ENCODE measurements at regions of chr16 and their contacts with region 1.

Region 1: DNA sequence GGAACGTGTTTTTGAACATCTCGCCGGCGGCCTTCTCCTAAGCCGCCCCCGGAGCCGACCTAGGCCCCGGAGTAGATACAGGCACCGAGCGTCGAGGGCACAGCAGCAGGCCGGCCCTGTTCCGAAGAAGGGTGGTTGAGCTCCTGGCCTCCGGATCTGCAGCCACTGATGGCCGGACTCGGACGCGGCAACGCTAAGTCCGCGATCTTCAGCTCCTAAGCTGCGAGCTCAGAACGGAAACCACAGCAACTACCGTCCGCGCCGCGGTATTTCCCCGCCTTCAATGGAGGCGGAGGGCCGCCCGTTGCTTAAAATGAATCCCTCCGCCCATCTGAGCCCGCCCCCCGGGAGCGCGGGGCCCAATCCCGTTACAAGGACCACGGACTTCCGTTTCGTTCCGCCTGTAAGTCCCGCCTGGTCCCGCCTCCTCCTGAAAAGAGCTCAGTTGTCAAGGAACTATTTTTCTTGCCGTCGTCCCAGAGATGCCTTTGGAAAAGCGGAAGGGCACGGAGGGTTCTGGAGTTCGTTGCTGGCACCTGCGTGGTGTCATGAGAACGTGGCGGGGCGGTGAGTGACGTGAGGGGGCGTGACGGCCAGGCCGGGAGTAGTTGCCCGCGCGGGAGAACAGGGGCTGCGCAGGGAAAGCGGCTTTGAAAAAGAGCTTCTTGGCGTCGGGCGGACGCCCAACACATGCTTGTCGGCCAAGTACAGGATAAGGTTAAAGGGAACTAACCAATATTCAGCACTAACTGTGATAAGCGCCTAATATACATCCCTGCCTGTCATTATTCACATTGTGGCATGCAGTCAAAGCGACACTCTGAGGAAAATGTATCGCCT is at the start of gene CFAP20:
- DNase-seq: peak; percentile 87 to 99 (median 97)
- ATAC-seq: peak; percentile 94
- H3K4me3 ChIP-seq: peak within 1 kb of the TSS; percentile 99
- H3K4me3 Mint-ChIP-seq: peak within 1 kb of the TSS; percentile 89 to 96 (median 92)
- H3K27ac ChIP-seq: peak within 1 kb of the TSS; percentile 90
- H3K27ac Mint-ChIP-seq: peak within 1 kb of the TSS; percentile 80 to 98 (median 94)
- H3K4me1 ChIP-seq: peaks cover 17 to 29% of the 10 kb centered on the region in 2 donors
- H3K4me1 Mint-ChIP-seq: peaks cover 30 to 47% (median 45%) of the 10 kb centered on the region in 7 donors
- H3K27me3 ChIP-seq: no peaks in the 10 kb centered on the region
- H3K27me3 Mint-ChIP-seq: no peaks in the 10 kb centered on the region
- total RNA-seq, gene CFAP20: 28.2 to 165 (median 40.7) TPM

Region 2: DNA sequence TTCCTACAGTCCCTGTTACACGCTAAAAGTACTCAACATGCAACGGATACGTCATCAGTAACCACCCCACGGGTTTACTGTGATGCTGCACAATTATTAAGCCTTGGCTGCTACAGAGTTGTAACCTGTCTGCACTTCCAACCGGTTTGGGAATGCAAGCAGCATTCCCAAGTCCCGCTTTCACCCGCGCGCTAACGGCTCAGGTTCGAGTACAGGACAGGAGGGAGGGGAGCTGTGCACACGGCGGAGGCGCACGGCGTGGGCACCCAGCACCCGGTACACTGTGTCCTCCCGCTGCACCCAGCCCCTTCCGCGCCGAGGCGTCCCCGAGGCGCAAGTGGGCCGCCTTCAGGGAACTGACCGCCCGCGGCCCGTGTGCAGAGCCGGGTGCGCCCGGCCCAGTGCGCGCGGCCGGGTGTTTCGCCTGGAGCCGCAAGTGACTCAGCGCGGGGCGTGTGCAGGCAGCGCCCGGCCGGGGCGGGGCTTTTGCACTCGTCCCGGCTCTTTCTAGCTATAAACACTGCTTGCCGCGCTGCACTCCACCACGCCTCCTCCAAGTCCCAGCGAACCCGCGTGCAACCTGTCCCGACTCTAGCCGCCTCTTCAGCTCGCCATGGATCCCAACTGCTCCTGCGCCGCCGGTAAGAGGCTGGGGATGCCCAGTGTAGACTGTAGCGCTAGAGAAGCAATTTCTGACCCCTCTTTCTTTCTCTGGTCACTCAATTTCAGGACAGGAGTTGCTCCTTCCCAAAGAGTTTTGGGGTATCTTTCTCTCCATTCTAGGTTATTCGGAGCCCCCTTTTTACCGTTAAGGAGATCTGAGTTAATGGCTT is 1521.1 kb before region 1 on chr16 and contains the start of gene MT2A:
- CTCF ChIA-PET with region 1: no interaction called
- POLR2A ChIA-PET with region 1: no interaction called
- intact Hi-C with region 1: loop called in 1 of 2 experiments (anchors 2 kb)
- DNase-seq: peak; percentile 70 to 89 (median 84)
- ATAC-seq: peak; percentile 88
- H3K4me3 ChIP-seq: peak within 1 kb of the TSS; percentile 97
- H3K4me3 Mint-ChIP-seq: peak within 1 kb of the TSS; percentile 85 to 100 (median 96)
- H3K27ac ChIP-seq: peak within 1 kb of the TSS; percentile 94
- H3K27ac Mint-ChIP-seq: peak within 1 kb of the TSS; percentile 85 to 99 (median 93)
- H3K4me1 ChIP-seq: peaks cover 29 to 34% of the 10 kb centered on the region in 2 donors
- H3K4me1 Mint-ChIP-seq: peaks cover 35 to 52% (median 47%) of the 10 kb centered on the region in 7 donors
- H3K27me3 ChIP-seq: no peaks in the 10 kb centered on the region
- H3K27me3 Mint-ChIP-seq: no peaks in the 10 kb centered on the region
- total RNA-seq, gene MT2A: 15.0 to 435 (median 32.8) TPM

Region 3: DNA sequence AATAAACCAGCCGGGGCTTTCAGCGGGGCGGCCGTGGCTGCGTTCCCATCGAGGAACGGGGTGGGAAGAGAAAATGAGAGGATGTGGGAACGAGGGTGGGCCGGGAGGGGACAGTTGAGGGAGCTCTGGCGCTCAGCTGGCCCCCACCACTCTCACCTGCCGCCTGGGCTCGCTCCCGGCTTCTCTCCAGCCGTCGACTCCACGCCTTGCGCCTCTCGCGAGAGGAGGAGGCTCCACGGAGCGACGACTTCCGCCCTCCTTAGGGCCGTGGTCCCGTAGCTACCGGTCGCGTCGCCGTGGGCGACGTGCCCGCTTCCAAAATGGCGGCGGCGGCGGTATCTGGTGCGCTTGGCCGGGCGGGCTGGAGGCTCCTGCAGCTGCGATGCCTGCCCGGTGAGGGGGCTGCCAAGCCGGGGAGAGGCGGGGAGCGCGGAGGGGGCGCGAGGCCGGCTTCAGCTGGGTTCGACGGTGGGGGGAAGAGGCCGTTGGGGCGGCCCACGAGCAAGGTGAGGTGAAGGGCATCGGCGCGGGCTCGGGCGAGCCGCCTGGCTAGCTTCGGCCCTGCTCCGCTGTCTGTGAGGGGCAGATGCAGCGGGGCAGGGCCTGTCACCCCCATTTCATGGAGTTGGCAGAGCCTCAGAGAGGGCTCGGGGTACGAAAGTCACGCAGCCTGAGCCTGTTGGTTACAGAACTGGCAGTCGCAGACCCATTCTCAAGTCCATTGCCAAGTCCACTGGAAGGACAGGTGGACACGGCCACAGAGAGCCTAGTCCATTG is 681.9 kb before region 1 on chr16 and contains the starts of genes CIAPIN1 and COQ9:
- CTCF ChIA-PET with region 1: no interaction called
- POLR2A ChIA-PET with region 1: no interaction called
- intact Hi-C with region 1: loop called in 1 of 2 experiments (anchors 2 kb)
- DNase-seq: peak; percentile 83 to 94 (median 88)
- ATAC-seq: peak; percentile 99
- H3K4me3 ChIP-seq: peak within 1 kb of the TSS; percentile 84
- H3K4me3 Mint-ChIP-seq: peak within 1 kb of the TSS; percentile 90 to 97 (median 92)
- H3K27ac ChIP-seq: peak within 1 kb of the TSS; percentile 87
- H3K27ac Mint-ChIP-seq: peak within 1 kb of the TSS; percentile 75 to 96 (median 90)
- H3K4me1 ChIP-seq: peaks cover 7 to 17% of the 10 kb centered on the region in 2 donors
- H3K4me1 Mint-ChIP-seq: peaks cover 15 to 64% (median 45%) of the 10 kb centered on the region in 7 donors
- H3K27me3 ChIP-seq: no peaks in the 10 kb centered on the region
- H3K27me3 Mint-ChIP-seq: no peaks in the 10 kb centered on the region
- total RNA-seq, gene CIAPIN1: 33.6 to 52.8 (median 35.8) TPM
- total RNA-seq, gene COQ9: 16.4 to 45.4 (median 36.6) TPM

Region 4: DNA sequence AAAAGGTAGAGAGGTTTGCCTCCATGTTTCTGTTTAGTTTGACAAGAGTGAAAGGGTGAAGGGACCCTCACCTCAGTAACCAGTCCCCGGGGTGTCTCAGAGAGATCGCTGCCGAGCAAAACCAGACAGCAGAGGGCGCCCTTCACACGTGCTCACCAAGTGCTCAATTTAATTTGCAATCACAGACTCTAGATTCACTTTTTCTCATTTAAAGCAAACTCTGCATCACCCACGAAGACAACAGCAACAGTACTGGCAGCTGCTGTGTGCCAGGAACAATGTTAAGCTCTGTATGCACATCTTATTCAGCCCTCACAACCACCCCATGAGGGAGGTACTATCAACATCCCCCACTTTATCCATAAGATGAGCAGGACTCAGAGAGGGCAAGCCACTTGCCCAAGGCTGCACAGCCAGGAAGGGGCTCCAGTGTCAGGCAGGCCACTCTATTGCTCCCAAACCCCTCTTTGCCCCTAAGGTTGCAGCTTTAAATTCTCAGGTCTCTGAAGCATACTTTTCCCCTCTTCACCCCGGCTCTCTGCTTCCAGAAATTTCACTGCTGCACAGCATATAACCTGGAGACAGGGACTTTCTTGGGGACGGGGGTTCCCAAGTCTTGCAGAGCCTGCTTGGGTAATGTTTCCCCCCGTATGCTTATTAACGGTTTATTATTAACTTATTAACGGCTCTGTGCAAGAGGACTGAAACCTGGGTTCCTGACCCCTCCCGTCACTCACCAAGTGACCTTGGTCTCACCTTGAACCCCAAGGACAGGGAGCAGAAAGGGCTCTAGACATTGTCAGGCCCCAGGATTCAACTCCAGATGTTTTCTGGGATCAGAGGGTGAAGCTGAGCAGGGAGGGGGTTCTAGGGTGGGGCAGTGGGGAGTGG is 229.3 kb before region 1 on chr16:
- CTCF ChIA-PET with region 1: no interaction called
- POLR2A ChIA-PET with region 1: no interaction called
- intact Hi-C with region 1: loop called in 1 of 2 experiments (anchors 2 kb)
- DNase-seq: peak; percentile 55 to 81 (median 71)
- ATAC-seq: peak; percentile 86
- H3K4me3 ChIP-seq: no peak overlapping the region
- H3K4me3 Mint-ChIP-seq: no peak overlapping the region
- H3K27ac ChIP-seq: no peak overlapping the region
- H3K27ac Mint-ChIP-seq: peak overlapping the region in 1 of 9 donors; percentile 1
- H3K4me1 ChIP-seq: no peaks in the 10 kb centered on the region
- H3K4me1 Mint-ChIP-seq: peaks cover under 1 to 6% (median 3%) of the 10 kb centered on the region in 7 donors
- H3K27me3 ChIP-seq: no peaks in the 10 kb centered on the region
- H3K27me3 Mint-ChIP-seq: peaks cover 4 to 11% (median 8%) of the 10 kb centered on the region in 5 donors

Region 5: DNA sequence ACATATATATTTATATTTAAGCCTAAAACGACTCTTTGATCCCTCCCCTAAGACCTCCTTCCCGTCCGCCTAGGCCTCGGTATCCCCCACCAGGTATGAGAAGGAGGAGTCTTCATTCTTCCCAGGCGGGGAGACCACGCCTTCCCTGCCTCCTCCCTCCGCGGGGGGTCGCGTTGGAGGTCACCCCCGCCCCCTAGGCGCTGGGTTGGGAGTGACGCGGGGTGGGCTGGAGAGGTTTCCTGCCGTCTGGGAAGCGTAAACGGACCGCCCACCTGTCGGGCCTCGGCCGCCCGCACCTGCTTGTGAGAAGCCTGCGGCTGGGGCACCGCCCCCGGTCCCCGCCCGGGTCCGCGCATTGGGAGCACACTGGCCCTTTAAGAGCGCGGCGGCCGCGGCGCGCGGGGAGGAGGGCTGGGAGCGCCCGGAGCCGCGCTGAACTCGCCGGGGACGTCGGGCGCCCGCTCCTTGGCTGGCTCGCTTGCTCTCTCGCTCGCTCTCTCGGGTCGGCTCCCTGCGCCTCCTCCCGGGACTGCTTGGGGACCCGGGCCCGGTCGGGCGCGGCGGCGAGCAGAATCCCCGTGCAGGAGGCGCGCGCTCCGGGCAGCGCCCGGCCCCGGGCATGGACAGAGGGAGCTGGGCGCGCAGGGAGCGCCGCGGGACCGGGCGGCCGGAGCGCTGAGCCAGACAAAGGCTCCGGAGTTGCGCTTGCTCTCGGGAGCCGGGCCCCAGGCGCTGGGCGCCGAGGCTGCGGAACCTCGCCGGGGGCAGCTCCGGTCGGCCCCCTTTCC is 103.8 kb before region 1 on chr16 and contains the start of gene MMP15:
- CTCF ChIA-PET with region 1: interaction called, 3 read pairs
- POLR2A ChIA-PET with region 1: no interaction called
- intact Hi-C with region 1: loop called (anchors 1 kb)
- DNase-seq: peak; percentile 27 to 74 (median 43)
- ATAC-seq: peak; percentile 76
- H3K4me3 ChIP-seq: peak within 1 kb of the TSS; percentile 78
- H3K4me3 Mint-ChIP-seq: peak within 1 kb of the TSS; percentile 90 to 95 (median 93)
- H3K27ac ChIP-seq: no peak within 1 kb of the TSS
- H3K27ac Mint-ChIP-seq: peak within 1 kb of the TSS; percentile 73 to 90 (median 84)
- H3K4me1 ChIP-seq: peaks cover 8 to 9% of the 10 kb centered on the region in 2 donors
- H3K4me1 Mint-ChIP-seq: peaks cover 6 to 18% (median 12%) of the 10 kb centered on the region in 7 donors
- H3K27me3 ChIP-seq: no peaks in the 10 kb centered on the region
- H3K27me3 Mint-ChIP-seq: peaks cover 0 to 39% (median 3%) of the 10 kb centered on the region in 5 donors
- total RNA-seq, gene MMP15: 0.20 to 0.85 (median 0.69) TPM

Region 6: DNA sequence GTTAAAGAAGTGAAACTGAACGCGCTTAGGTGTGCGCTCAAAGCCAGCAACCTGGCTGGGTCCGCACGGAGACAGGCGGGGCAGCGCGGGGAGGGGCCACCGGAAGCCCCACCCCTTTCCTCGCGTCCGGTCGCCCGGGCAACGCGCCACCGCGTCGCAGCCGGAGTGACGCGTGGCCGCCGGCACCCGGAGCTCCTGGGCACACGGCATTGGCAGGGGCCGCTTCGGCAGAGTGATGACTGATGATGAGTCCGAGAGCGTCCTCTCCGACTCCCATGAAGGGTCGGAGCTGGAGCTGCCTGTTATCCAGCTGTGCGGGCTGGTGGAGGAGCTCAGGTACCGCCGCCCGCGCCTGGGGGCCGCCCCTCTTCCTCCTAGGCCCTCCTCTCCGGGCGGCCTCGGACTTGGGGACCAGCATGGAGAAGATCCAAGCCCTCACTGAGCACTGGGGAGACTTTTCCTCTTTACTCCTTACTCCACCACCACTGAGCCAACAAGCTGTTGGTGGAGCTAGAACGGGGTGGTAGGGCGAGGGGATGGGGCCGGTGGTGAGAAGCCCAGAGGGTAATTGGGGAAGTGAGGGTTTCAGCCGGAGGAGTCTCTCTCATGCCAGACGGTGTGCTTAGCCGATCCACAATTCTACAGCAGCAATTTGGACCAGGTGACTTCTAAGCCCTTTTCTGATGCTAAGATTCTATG is 120.6 kb after region 1 on chr16:
- CTCF ChIA-PET with region 1: no interaction called
- POLR2A ChIA-PET with region 1: no interaction called
- intact Hi-C with region 1: loop called in 1 of 2 experiments (anchors 1 kb)
- DNase-seq: peak; percentile 74 to 91 (median 86)
- ATAC-seq: peak; percentile 98
- H3K4me3 ChIP-seq: peak overlapping the region; percentile 77
- H3K4me3 Mint-ChIP-seq: peak overlapping the region; percentile 77 to 87 (median 82)
- H3K27ac ChIP-seq: peak overlapping the region; percentile 43
- H3K27ac Mint-ChIP-seq: peak overlapping the region in 8 of 9 donors; percentile 31 to 86 (median 67)
- H3K4me1 ChIP-seq: peaks cover 5 to 7% of the 10 kb centered on the region in 2 donors
- H3K4me1 Mint-ChIP-seq: peaks cover 6 to 13% (median 12%) of the 10 kb centered on the region in 7 donors
- H3K27me3 ChIP-seq: no peaks in the 10 kb centered on the region
- H3K27me3 Mint-ChIP-seq: peaks cover 0 to 17% (median under 1%) of the 10 kb centered on the region in 5 donors

Region 7: GRCh38 chr16:58515125-58515870 is 386.0 kb after region 1 on chr16 and contains the start of gene SETD6:
- CTCF ChIA-PET with region 1: no interaction called
- POLR2A ChIA-PET with region 1: no interaction called
- intact Hi-C with region 1: loop called in 1 of 2 experiments (anchors 10 kb)
- DNase-seq: peak; percentile 49 to 89 (median 61)
- ATAC-seq: peak; percentile 85
- H3K4me3 ChIP-seq: peak within 1 kb of the TSS; percentile 82
- H3K4me3 Mint-ChIP-seq: peak within 1 kb of the TSS; percentile 78 to 95 (median 88)
- H3K27ac ChIP-seq: peak within 1 kb of the TSS; percentile 81
- H3K27ac Mint-ChIP-seq: peak within 1 kb of the TSS; percentile 69 to 95 (median 87)
- H3K4me1 ChIP-seq: peaks cover 7 to 10% of the 10 kb centered on the region in 2 donors
- H3K4me1 Mint-ChIP-seq: peaks cover 9 to 40% (median 26%) of the 10 kb centered on the region in 7 donors
- H3K27me3 ChIP-seq: no peaks in the 10 kb centered on the region
- H3K27me3 Mint-ChIP-seq: no peaks in the 10 kb centered on the region
- total RNA-seq, gene SETD6: 20.7 to 41.3 (median 39.0) TPM

Region 8: DNA sequence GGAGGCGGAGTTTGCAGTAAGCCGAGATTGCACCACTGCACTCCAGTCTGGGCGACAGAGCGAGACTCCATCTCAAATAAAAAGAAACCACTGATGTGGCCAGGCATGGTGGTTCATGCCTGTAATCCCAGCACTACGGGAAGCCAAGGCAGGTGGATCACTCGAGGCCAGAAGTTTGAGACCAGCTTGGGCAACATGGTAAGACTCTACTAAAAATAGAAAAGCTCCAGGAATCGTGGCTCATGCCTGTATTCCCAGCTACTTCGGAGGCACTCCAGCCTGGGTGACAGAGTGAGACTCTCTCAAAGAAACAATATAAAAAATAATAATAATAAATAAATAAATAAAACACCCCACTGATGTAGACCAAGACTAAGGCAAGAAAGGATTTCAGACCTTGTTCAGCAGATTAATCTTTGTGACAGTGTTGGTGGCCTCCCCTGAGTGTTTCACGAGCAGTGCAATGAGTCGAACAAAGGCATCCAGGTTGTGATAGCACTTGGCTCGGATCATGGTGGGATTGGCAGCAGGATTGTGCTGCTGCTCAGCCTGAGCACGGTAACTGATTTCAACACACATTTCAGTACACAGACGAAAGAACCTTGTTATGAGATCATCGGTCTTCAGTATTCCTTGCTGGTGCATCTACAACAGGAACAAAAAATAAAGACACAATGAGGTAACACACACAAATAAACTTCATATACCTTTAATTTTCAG is 404.6 kb after region 1 on chr16:
- CTCF ChIA-PET with region 1: no interaction called
- POLR2A ChIA-PET with region 1: no interaction called
- intact Hi-C with region 1: no loop called
- DNase-seq: no peak
- ATAC-seq: no peak
- H3K4me3 ChIP-seq: no peak overlapping the region
- H3K4me3 Mint-ChIP-seq: no peak overlapping the region
- H3K27ac ChIP-seq: no peak overlapping the region
- H3K27ac Mint-ChIP-seq: peak overlapping the region in 1 of 9 donors; percentile 65
- H3K4me1 ChIP-seq: no peaks in the 10 kb centered on the region
- H3K4me1 Mint-ChIP-seq: peaks cover 0 to 5% (median 0%) of the 10 kb centered on the region in 7 donors
- H3K27me3 ChIP-seq: no peaks in the 10 kb centered on the region
- H3K27me3 Mint-ChIP-seq: no peaks in the 10 kb centered on the region

Measured in naive thymus-derived CD4-positive, alpha-beta T cell (primary cell).